Activated CD8-positive, alpha-beta T cell treated with anti-CD3 and anti-CD28 coated beads, Interleukin-2, amount 10 ng/mL, durations not matched to agents 7 days and 5 days (primary cell): ENCODE measurements at regions of chr1 and their contacts with region 1.

Region 1: GRCh38 chr1:116763787-116764465 is 9.7 kb downstream of the CD2 start:
- DNase-seq: peak; percentile 74
- ATAC-seq: peak; percentile 21
- H3K4me3 Mint-ChIP-seq: peak overlapping the region; percentile 79
- H3K27ac Mint-ChIP-seq: peak overlapping the region; percentile 99
- H3K4me1 Mint-ChIP-seq: peaks cover 97% of the 10 kb centered on the region
- H3K27me3 Mint-ChIP-seq: no peaks in the 10 kb centered on the region

Region 2: DNA sequence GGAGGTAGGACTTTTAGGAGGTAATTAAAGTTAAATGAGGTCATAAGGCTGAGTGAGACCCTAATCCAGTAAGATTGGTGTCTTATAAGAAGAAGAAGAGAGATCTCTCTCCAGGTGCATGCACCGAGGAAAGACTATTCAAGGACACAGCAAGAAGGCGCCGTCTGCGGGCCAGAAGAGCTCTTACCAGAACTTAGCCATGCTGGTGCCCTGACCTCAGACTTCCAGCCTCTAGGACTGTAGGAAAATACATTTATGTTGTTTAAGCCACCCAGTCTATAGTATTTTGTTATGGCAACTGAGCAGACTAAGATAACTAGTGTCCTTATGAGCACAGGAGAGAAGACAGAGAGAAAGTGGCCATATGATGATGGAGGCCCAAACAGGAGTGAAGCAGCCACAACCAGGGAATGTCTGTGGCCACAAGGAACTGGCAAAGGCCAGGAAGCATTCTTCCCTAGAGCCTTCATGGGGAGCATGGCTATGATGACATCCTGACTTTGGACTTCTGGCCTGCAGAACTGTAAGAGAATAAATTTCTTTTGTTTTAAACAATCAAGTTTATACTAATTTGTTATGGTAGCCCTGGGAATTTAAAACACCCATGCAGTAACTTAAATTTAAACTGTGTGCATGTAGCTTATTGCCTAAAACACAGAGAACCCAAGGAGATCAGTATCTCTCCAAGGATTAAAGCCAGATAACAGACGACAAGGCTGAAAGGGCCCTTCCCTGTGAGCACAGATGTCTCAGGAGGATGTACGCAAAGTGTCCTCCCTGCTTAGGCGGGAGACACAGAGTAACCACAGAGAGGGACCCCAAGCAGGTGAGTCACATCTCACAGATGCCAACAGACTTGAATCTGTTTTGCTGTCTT is 183.2 kb before region 1 on chr1:
- CTCF ChIA-PET with region 1: no interaction called
- POLR2A ChIA-PET with region 1: no interaction called
- DNase-seq: no peak
- ATAC-seq: no peak
- H3K4me3 Mint-ChIP-seq: no peak overlapping the region
- H3K27ac Mint-ChIP-seq: no peak overlapping the region
- H3K4me1 Mint-ChIP-seq: no peaks in the 10 kb centered on the region
- H3K27me3 Mint-ChIP-seq: peaks cover 2% of the 10 kb centered on the region

Region 3: DNA sequence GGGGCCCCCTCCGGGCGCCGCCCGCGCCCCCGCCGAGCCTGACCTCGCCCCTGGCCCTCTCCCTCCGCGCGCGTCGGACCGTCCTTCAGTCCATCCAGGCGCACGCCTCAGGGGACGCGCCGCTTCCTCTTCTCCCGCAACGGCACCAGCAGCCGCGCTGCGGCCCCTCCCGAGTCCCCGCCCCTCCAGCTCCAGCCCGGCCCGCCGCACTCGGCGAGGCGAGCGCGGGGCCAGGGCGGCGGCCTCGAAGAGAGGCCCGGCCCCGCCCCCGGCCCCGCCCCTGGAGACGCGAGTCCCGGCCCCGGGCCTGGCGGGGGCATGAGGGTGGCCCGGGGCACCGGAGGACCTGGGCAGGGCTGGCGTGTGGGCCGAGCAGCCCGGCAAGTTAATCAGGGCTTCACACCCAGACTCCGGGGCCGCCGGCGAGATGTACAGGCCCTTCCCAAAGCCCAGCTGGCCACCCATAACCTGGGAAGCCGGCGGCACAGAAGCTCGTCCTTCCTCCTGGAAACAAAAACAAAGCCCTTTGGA is 96.3 kb before region 1 on chr1 and contains the start of gene IGSF3:
- CTCF ChIA-PET with region 1: no interaction called
- POLR2A ChIA-PET with region 1: no interaction called
- DNase-seq: peak; percentile 51
- ATAC-seq: peak; percentile 89
- H3K4me3 Mint-ChIP-seq: peak within 1 kb of the TSS; percentile 68
- H3K27ac Mint-ChIP-seq: no peak within 1 kb of the TSS
- H3K4me1 Mint-ChIP-seq: peaks cover 22% of the 10 kb centered on the region
- H3K27me3 Mint-ChIP-seq: peaks cover 74% of the 10 kb centered on the region
- total RNA-seq, gene IGSF3: 0.11 to 0.16 TPM

Region 4: DNA sequence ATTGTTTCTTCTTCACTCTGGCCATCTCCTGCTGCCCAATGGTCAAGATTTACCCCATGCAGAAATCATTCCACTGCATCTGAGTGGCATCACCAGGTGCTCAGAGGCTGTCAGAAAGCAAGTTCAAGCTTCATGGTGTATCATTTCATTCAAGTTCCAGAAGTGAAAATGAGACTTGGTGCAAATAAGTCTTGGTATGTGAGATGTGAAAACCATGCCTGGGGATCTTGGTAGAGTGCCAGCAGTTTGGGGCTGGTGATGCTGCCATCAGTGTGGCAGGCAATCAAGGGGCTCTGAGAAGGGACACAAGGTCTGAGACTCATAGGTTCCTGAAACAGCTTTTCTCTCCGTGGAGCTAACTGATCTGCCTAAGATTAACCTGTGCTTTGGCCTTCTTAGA is 42.3 kb after region 1 on chr1:
- CTCF ChIA-PET with region 1: interaction called, 202 read pairs
- POLR2A ChIA-PET with region 1: interaction called, 377 read pairs
- DNase-seq: peak; percentile 56
- ATAC-seq: peak; percentile 35
- H3K4me3 Mint-ChIP-seq: peak overlapping the region; percentile 58
- H3K27ac Mint-ChIP-seq: peak overlapping the region; percentile 92
- H3K4me1 Mint-ChIP-seq: peaks cover 91% of the 10 kb centered on the region
- H3K27me3 Mint-ChIP-seq: no peaks in the 10 kb centered on the region

Region 5: DNA sequence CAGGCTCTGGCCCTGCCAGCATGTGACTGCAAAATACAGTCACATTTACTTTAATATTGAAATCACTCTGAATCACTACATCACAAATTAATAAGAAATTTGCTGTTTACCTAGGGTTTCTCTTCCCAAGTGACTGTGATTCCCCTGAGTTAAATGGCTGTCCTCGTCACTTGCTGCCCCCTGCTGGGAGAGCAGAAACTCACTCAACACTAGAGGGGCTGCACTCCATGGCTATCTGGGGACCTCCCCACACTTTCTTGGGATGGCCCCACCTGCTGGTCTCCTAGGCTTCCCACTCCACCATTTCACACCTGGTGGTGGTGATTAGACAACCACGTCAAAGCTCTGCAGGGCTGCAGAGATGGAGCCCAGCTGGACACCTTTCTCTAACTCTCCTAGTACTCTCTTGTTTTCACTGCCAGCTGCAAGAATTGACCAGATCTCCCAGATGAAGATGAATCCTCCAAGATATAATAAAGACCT is 53.7 kb after region 1 on chr1:
- CTCF ChIA-PET with region 1: interaction called, 229 read pairs
- POLR2A ChIA-PET with region 1: interaction called, 132 read pairs
- DNase-seq: peak; percentile 83
- ATAC-seq: peak; percentile 75
- H3K4me3 Mint-ChIP-seq: peak overlapping the region; percentile 44
- H3K27ac Mint-ChIP-seq: peak overlapping the region; percentile 73
- H3K4me1 Mint-ChIP-seq: peaks cover 61% of the 10 kb centered on the region
- H3K27me3 Mint-ChIP-seq: no peaks in the 10 kb centered on the region

Region 6: DNA sequence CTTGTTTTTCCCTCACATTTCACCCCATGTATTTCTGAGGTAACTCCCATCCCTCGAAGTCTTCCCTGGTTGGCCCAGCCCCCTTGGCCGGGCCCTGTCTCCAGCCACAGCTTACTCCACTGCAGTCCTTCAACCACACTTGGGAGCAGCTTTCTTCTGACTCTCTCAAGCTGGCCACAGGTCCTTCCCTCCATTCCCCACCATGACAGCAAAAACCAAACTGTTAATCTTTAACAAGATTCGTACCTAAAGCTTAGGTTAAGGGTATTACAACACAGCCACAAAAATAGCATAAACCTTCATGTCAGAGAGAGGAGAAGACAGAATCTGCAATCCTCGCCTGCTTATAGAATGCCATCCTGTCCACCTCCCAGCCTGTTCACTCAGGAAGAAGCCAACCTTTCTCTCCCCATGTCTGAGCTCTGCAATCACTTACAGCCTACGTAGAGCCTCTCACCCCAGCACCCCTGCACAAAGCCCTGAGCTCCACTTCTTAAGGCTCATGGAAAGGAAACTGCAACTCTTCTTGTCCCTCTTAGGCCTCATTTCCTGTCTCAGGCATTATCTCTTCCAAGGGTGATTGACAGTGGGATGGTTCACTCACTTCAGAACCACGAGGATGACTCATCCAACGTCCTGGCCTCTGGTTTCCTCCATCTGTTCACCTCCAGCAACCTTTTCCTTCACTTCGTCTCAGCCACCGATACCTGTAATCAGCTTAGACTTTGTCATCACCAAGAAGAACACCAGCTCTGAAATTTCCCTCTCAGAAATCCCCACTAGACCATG is 63.1 kb after region 1 on chr1:
- CTCF ChIA-PET with region 1: interaction called, 9 read pairs
- POLR2A ChIA-PET with region 1: interaction called, 29 read pairs
- DNase-seq: peak; percentile 78
- ATAC-seq: peak; percentile 88
- H3K4me3 Mint-ChIP-seq: peak overlapping the region; percentile 52
- H3K27ac Mint-ChIP-seq: peak overlapping the region; percentile 94
- H3K4me1 Mint-ChIP-seq: peaks cover 49% of the 10 kb centered on the region
- H3K27me3 Mint-ChIP-seq: no peaks in the 10 kb centered on the region

Region 7: DNA sequence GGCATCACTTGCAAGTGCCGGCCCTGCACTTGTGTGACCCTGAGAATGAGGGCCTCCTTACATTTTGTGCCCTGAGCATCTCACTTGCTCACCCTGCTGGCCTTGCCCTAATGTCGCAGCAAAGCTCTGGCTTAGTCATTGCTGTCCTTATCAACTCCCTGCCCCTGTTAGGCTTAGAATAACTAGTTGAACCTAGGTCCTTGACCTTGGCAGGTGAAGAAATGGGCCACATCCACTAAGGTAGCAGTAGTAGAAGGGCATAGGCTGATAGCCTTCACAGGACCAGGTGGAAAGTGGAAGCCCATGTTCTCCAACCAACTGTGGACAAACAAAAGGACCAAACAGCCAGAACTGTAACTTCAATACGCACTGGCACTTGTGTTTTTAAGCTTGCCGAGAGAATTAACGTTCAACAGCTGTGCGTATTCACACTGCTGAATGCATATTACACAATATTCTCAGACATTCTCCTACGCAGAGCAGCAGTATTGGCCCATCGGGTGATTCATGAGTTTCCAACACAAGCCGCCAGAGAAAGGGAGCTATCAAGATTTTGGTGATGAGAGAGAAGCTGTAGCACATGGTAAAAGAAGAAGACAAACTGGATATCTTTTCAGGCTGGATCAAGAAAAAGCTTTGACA is 118.1 kb after region 1 on chr1:
- CTCF ChIA-PET with region 1: interaction called, 92 read pairs
- POLR2A ChIA-PET with region 1: interaction called, 13 read pairs
- DNase-seq: peak; percentile 65
- ATAC-seq: peak; percentile 35
- H3K4me3 Mint-ChIP-seq: no peak overlapping the region
- H3K27ac Mint-ChIP-seq: no peak overlapping the region
- H3K4me1 Mint-ChIP-seq: peaks cover 9% of the 10 kb centered on the region
- H3K27me3 Mint-ChIP-seq: no peaks in the 10 kb centered on the region

Region 8: DNA sequence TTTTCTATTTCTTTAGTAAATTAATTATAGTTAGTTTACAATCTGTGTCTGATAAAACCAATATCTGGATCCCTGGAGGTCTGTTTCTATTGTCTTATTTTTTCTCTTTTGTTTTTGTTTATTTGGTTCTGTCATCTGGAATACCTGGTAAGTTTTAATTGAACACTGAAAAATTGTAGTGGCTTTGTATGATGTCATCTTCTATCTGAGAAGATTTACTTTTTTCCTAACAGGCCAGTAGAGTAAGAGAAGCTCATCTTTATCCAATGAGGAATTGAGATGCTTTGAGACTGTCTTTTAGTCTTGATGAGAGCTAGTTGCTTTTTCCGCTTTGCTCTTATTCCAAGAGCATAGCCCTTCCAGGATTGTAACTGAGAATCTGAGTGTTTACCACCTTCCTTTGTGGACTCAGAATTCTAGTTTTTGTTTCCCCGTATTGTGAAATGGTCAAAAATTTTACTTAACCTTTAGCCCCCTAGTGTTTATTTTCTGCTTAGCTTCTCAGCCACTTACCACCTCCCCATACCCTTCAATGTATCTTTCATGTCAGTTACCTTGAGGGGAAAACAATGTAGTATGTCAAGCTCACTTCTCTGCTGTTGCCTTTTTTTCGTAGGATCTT is 170.8 kb after region 1 on chr1:
- CTCF ChIA-PET with region 1: interaction called, 10 read pairs
- POLR2A ChIA-PET with region 1: interaction called, 3 read pairs
- DNase-seq: peak; percentile 27
- ATAC-seq: peak; percentile 73
- H3K4me3 Mint-ChIP-seq: no peak overlapping the region
- H3K27ac Mint-ChIP-seq: peak overlapping the region; percentile 72
- H3K4me1 Mint-ChIP-seq: peaks cover 26% of the 10 kb centered on the region
- H3K27me3 Mint-ChIP-seq: peaks cover 2% of the 10 kb centered on the region

Region 9: GRCh38 chr1:117321680-117322609 is 558.0 kb after region 1 on chr1:
- CTCF ChIA-PET with region 1: no interaction called
- POLR2A ChIA-PET with region 1: no interaction called
- DNase-seq: no peak
- ATAC-seq: no peak
- H3K4me3 Mint-ChIP-seq: no peak overlapping the region
- H3K27ac Mint-ChIP-seq: no peak overlapping the region
- H3K4me1 Mint-ChIP-seq: no peaks in the 10 kb centered on the region
- H3K27me3 Mint-ChIP-seq: peaks cover 21% of the 10 kb centered on the region